ENCODE measurements at regions of chr17 and their contacts with region 1.

Region 1: DNA sequence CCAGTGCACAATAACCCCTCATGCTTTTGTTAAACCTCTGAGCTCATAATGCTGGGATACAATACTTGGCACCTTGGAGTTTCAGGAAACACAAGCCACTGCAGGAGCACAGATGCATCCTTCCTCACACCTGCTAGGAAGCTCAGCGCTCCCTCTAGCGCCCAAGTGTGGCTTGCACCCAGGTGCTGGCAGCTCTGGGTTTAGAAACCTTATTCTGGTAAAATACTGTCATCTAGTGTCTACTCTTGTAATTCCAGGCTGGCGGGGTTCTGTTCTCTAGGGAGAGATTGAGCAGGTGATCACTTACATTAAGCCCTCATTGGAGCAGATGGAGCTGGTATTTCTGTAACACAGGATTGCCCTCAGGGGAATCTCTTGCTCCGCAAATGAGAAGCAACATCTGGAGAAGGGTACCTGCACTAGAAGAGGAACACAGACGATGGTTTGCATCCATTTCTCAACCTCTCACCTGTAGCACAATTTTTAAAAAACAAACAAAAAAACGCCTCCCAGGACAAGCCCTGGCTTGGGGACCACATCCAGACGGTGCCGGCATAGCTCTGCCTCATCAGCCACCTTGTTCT is 1.5 kb downstream of the CCL1 start:
- DNase-seq: peak; percentile 85
- H3K4me3 Mint-ChIP-seq: no peak overlapping the region
- H3K27ac Mint-ChIP-seq: no peak overlapping the region
- H3K4me1 Mint-ChIP-seq: peaks cover 7% of the 10 kb centered on the region
- H3K27me3 Mint-ChIP-seq: peaks cover 26% of the 10 kb centered on the region

Region 2: DNA sequence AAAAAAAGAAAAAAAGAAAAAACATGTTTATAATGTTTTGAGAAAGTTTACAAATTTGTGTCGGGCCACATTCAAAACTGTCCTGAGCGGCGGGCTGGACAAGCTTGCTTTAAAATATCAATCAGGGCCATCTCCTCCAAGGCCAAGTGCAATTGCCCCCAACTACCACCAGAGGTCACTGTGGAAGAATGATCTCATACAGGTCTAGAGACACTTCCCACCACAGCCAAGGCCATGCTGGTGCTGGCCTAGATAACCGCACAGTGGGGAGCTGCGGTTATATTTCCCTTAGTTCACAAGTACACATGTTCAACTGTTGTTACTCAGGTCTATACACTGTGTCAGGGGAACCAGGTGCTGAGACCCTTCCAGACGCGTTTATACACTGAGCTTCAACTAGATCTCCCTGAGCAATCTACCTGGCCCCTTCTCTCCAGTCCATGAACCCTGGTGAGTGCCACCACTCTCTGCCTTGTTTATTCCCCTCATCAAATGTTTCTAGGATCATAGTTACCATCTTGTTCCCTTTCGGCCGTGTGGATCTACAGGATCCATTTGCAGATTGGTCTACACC is 190.2 kb before region 1 on chr17:
- CTCF ChIA-PET with region 1: interaction called, 24 read pairs
- POLR2A ChIA-PET with region 1: no interaction called
- intact Hi-C with region 1: no loop called
- DNase-seq: peak; percentile 66
- H3K4me3 Mint-ChIP-seq: no peak overlapping the region
- H3K27ac Mint-ChIP-seq: no peak overlapping the region
- H3K4me1 Mint-ChIP-seq: no peaks in the 10 kb centered on the region
- H3K27me3 Mint-ChIP-seq: peaks cover 9% of the 10 kb centered on the region

Region 3: DNA sequence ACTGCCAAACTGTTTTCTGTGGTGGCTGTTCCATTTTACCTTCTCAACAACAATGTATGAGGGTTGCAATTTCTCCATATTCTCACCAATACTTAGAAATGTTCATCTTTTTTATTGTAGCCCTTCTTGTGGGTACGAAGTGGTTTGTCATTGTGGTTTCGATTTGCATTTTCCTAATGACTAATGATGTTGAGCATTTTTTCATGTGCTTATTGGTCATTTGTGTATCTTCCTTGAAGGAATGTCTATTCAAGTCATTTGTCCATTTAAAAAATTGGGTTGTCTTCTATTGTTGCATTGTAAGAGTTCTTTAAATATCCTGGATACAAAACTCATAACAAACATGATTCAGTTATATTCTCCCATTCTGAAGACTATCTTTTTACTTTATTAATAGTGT is 154.0 kb before region 1 on chr17:
- CTCF ChIA-PET with region 1: interaction called, 358 read pairs
- POLR2A ChIA-PET with region 1: interaction called, 18 read pairs
- intact Hi-C with region 1: no loop called
- DNase-seq: no peak
- H3K4me3 Mint-ChIP-seq: no peak overlapping the region
- H3K27ac Mint-ChIP-seq: no peak overlapping the region
- H3K4me1 Mint-ChIP-seq: no peaks in the 10 kb centered on the region
- H3K27me3 Mint-ChIP-seq: peaks cover 33% of the 10 kb centered on the region

Region 4: GRCh38 chr17:34349751-34350150 is 11.8 kb before region 1 on chr17:
- CTCF ChIA-PET with region 1: interaction called, 12 read pairs
- POLR2A ChIA-PET with region 1: no interaction called
- intact Hi-C with region 1: no loop called
- DNase-seq: no peak
- H3K4me3 Mint-ChIP-seq: no peak overlapping the region
- H3K27ac Mint-ChIP-seq: no peak overlapping the region
- H3K4me1 Mint-ChIP-seq: no peaks in the 10 kb centered on the region
- H3K27me3 Mint-ChIP-seq: peaks cover 15% of the 10 kb centered on the region

Region 5: GRCh38 chr17:34386697-34387550 is 25.4 kb after region 1 on chr17:
- CTCF ChIA-PET with region 1: interaction called, 17 read pairs
- POLR2A ChIA-PET with region 1: no interaction called
- intact Hi-C with region 1: no loop called
- DNase-seq: no peak
- H3K4me3 Mint-ChIP-seq: no peak overlapping the region
- H3K27ac Mint-ChIP-seq: no peak overlapping the region
- H3K4me1 Mint-ChIP-seq: peaks cover 19% of the 10 kb centered on the region
- H3K27me3 Mint-ChIP-seq: peaks cover 29% of the 10 kb centered on the region